ENCODE measurements at regions of chr19 and their contacts with region 1.

Region 1: GRCh38 chr19:42529248-42529764 is 1.0 kb upstream of the CEACAM1 start:
- DNase-seq: peak; percentile 85
- CTCF ChIP-seq: peak; percentile 81

Region 2: DNA sequence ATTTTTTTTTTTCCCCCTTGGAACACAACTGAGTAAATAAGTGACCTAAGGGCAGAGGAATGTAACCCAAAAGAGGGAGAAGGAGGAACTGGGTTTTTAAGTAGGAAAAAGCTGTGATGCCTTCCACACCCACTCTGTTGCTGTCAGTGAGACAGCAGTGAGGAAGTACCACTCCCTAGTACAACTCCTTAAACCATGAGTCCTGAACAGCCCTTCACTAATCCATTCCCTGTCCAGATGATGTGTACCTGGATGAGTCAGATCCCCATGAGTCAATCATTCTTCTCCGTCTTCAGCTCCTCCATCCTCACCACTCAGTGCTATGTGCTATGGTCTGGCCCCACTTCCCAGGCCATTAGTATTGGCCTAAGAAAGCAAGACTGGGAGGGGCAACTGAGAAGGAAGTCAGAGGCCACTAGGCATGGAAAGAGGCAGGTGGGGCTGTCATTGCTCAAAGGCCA is 73.7 kb before region 1 on chr19:
- in situ Hi-C with region 1: loop called (anchors 5 kb)
- DNase-seq: no peak
- CTCF ChIP-seq: no peak